Astrocyte of the spinal cord (primary cell): ENCODE measurements at regions of chr1 and their contacts with region 1.

Region 1: GRCh38 chr1:181166377-181167196 is 78.1 kb downstream of the IER5 start:
- DNase-seq: peak; percentile 74
- H3K4me3 ChIP-seq: no peak overlapping the region
- CTCF ChIP-seq: peak; percentile 85

Region 2: GRCh38 chr1:180888870-180889269 is 277.7 kb before region 1 on chr1:
- in situ Hi-C with region 1: no loop called
- DNase-seq: no peak
- H3K4me3 ChIP-seq: no peak overlapping the region
- CTCF ChIP-seq: no peak

Region 3: GRCh38 chr1:180981596-180982387 is 184.8 kb before region 1 on chr1:
- in situ Hi-C with region 1: no loop called
- DNase-seq: peak; percentile 78
- H3K4me3 ChIP-seq: no peak overlapping the region
- CTCF ChIP-seq: no peak

Region 4: DNA sequence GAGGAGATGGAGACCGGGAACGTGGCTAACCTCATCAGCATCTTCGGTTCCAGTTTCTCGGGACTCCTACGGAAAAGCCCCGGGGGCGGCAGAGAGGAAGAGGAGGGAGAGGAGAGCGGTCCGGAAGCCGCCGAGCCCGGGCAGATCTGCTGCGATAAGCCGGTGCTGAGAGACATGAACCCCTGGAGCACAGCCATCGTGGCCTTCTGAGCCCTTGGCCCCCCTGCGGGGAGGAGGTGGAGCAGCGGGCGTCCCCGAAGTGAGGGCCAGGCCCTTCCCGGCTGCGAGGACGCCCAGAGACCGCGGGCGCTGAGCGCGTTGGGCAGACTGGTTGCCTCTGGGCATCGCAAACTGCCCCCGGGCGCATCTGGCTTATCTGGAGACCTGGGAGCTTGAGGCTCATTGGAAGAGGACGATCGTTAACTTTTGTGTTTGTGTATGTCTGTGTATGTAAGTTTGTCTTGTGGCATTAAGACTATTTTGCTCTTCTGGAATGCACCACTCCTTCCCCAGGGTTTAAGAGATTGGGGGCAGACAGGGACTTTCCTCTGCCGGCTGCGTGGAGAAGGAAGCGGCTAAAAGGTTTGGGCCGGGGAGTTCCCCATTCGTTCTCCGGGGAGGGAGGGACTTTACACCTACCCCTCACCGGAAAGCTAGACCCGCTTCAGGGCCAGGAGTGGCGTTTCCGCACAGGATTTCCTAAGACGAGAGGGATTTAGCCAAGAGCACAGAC is 76.7 kb before region 1 on chr1:
- in situ Hi-C with region 1: loop called (anchors 5 kb)
- DNase-seq: peak; percentile 53
- H3K4me3 ChIP-seq: peak overlapping the region; percentile 83
- CTCF ChIP-seq: no peak

Region 5: DNA sequence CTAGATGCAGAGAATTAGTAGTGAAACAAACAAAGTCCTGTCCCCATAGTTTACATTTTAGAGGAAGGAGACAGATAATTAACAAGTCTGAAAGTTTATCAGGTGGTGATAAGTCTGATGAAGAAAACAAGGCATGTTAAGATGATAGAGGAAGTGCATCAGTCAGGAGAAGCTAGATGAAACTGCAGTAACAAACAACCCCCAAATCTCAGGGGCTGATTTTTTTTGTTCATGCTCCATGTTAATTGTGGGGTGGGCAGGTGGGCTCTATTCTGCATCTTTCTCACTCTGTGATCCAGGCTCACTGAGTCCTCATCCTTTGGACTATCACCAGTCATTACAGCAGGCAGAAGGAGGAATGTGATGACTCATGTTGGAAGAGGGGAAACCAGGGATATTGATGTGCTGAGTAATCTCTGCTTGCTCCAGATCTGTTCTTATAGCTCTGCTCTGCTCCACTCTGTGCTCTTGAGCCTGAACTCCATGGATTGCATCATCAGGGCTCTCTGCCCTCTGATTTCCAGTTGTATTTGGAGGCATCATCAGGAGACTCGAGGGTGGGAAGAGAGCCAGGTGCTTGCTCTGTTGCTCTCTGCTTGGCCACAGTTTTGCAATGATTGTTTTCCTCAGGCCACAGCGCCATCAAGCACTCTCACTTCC is 88.8 kb after region 1 on chr1:
- in situ Hi-C with region 1: no loop called
- DNase-seq: peak; percentile 93
- H3K4me3 ChIP-seq: no peak overlapping the region
- CTCF ChIP-seq: no peak